ENCODE measurements at regions of chr10 and their contacts with region 1.

Region 1: DNA sequence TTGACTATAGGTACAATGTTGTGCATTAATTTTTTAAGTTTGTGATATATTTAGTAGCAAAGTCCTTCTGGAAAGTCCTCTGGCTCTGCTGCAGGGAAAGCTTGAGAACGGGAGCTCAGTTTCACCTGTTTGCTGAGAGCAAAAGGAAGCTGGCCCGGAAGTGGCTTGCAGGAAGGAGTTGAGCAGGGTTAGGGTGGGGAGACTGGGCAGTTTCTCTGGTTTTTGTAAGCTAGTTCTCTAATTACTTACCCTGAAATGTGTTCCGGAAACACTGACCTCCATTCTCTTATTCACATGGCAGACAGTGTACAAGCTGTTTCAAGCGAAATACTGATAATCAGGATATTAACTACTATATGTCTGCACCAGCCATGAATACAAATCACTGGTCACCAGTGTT is 22.3 kb downstream of the MAP3K8 start:
- H3K4me3 Mint-ChIP-seq: no peak overlapping the region
- H3K27ac Mint-ChIP-seq: peak overlapping the region; percentile 84
- H3K4me1 Mint-ChIP-seq: peaks cover 44% of the 10 kb centered on the region
- H3K27me3 Mint-ChIP-seq: no peaks in the 10 kb centered on the region

Region 2: GRCh38 chr10:30529373-30529998 is 73.2 kb after region 1 on chr10:
- intact Hi-C with region 1: loop called (anchors 2 kb)
- H3K4me3 Mint-ChIP-seq: peak overlapping the region; percentile 64
- H3K27ac Mint-ChIP-seq: peak overlapping the region; percentile 96
- H3K4me1 Mint-ChIP-seq: peaks cover 62% of the 10 kb centered on the region
- H3K27me3 Mint-ChIP-seq: no peaks in the 10 kb centered on the region

Region 3: DNA sequence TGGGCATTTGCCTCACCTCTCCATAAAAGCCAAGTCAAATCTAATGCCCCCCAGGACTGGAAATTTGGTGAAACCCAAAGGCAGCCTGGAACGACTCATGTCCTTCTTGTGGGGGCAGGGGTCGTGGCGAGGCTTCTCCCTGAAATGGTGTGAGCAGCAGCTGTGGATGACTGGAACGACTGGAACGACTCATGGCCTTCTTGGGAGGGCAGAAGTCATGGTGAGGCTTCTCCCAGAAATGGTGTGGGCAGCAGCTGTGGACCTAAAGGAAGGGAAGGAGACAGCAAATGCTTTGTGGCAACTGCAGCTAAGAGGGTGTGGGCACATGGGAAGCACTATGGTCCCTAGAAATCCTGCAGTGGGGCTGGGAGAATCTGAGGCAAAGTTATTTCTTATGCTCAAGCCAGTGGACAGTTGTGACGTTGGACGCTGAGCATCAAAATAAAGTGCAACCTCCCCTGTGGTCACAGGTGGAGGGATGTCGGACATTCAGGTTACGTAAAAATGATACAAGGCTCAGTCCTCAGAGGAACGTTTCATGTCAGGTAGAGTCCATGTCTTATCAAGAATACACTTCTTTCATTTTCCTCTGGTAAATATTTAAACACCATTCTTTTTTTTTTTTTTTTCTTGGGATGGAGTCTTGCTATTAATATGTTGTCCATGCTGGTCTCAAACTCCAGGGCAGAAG is 1707.0 kb after region 1 on chr10:
- intact Hi-C with region 1: no loop called
- H3K4me3 Mint-ChIP-seq: no peak overlapping the region
- H3K27ac Mint-ChIP-seq: no peak overlapping the region
- H3K4me1 Mint-ChIP-seq: peaks cover 13% of the 10 kb centered on the region
- H3K27me3 Mint-ChIP-seq: peaks cover 7% of the 10 kb centered on the region